ACHN (cell line): ENCODE measurements at regions of chr9 and their contacts with region 1.

Region 1: DNA sequence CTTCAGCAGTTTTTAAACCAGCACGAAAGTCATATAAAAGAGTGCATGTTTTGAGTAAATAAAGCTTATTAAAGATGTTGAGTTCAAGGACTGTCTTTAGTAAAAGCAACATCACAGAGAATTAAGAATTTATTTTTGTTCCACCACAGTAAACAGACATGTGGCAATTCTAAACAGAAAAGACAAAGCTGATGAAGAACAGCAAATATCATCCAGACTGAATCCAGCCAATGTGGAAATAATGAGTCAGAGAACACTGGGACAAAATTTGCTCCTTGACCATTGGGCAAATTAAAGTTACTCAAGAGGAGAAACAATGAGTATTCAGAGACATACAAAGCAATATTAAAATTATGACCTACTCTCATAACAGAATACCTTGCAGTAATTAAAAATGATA is 28.8 kb downstream of the OR2K2 start:
- DNase-seq: no peak

Region 2: DNA sequence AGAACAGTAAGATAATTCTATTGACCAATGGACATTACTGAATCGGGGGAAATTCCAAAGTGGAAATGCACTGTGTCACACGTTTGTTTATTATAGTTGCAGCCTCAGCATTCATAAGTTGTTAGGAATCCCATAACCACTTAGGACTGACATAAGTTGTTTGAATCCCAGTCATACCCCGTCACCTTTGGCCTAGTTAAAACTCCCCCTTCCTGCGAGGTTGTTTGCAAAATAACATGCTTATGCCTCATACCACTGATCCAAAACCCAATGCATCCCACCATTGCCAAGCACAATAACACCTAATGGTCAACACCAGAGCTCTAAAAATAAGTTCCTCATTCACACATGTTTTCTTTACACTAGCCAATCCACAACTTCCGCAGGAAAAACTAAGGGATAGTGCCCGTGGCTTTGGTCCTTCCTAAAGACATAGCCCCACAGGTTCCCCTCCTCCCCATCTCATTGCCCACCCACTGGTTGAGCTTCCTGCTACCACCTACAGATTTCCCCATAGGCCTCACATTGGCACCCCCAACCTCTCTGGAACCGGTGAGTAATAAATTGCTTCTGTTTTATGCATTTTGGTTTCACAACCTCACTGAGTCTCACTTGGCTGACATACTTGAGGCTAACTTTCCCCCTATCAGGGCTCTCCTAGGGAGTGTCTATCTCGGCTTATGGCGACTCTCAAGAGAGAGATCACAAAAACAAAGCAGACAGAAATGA is 674.9 kb before region 1 on chr9:
- in situ Hi-C with region 1: loop called (anchors 25 kb)
- DNase-seq: no peak

Region 3: GRCh38 chr9:111559000-111559610 is 257.9 kb after region 1 on chr9:
- in situ Hi-C with region 1: no loop called
- DNase-seq: no peak